PC-9 (cell line): ENCODE measurements at regions of chr2 and their contacts with region 1.

Region 1: DNA sequence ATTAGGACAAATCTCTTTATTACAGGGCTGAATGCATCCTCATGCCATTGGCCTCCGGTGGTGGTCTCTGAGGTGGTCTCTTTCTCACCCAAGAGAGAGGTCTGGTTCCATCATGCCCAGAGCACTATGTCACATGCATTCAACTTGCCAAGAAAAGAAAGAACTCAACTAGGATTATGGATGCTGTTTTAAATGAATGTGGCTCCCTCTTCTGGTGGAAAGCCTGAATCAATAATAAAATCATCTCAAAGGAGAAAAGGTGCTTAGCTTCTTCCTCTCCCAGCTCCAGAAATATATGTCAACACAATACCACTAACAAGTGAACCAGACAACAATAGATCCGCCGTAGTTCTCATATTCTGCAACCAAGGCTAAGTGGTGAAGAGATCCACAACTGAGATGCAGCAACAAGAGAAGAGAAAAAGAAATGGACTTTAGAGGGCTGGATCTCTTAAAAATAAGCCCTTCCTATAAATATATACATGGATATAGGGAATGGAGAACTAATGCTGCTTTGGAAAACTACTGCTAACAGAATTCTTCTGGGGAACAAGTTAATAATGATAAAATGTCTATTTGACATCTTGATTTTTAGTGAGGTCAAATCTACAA is 396.8 kb downstream of the NCKAP5 start:
- DNase-seq: peak in 1 of 2 experiments; percentile 1
- H3K4me3 ChIP-seq: no peak overlapping the region
- H3K27ac ChIP-seq: no peak overlapping the region
- H3K4me1 ChIP-seq: no peaks in the 10 kb centered on the region
- H3K27me3 ChIP-seq: no peaks in the 10 kb centered on the region
- CTCF ChIP-seq: peak; percentile 79

Region 2: GRCh38 chr2:132547074-132547687 is 624.3 kb before region 1 on chr2:
- CTCF ChIA-PET with region 1: no interaction called
- POLR2A ChIA-PET with region 1: no interaction called
- intact Hi-C with region 1: loop called (anchors 1 kb)
- DNase-seq: peak in 1 of 2 experiments; percentile 41
- H3K4me3 ChIP-seq: no peak overlapping the region
- H3K27ac ChIP-seq: no peak overlapping the region
- H3K4me1 ChIP-seq: peaks cover 21% of the 10 kb centered on the region
- H3K27me3 ChIP-seq: no peaks in the 10 kb centered on the region
- CTCF ChIP-seq: peak; percentile 74

Region 3: GRCh38 chr2:132863961-132864360 is 307.5 kb before region 1 on chr2:
- CTCF ChIA-PET with region 1: no interaction called
- POLR2A ChIA-PET with region 1: no interaction called
- intact Hi-C with region 1: no loop called
- DNase-seq: no peak
- H3K4me3 ChIP-seq: no peak overlapping the region
- H3K27ac ChIP-seq: no peak overlapping the region
- H3K4me1 ChIP-seq: no peaks in the 10 kb centered on the region; the same call in 1 of the 2 replicates
- H3K27me3 ChIP-seq: no peaks in the 10 kb centered on the region; the same call in 1 of the 2 replicates
- CTCF ChIP-seq: no peak

Region 4: DNA sequence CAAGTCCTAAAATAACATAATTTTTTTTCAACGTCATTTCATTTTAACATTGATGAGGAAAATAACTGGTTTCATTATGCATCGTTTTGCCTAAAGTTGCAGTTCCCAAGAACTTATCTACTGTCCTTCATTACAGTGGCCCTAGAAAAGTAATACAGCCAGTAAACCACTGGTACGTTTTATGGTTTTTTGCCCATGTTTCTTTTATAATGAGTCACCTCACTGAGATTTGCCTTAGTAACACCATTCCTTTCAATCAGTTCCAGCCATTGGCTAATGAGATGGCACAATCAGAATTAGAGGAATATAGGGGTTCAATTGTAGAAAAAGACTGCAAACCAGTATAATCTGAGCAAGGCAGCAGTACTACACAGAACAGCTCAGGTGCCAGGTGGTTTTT is 78.9 kb before region 1 on chr2:
- CTCF ChIA-PET with region 1: no interaction called
- POLR2A ChIA-PET with region 1: no interaction called
- intact Hi-C with region 1: no loop called
- DNase-seq: no peak
- H3K4me3 ChIP-seq: no peak overlapping the region
- H3K27ac ChIP-seq: no peak overlapping the region
- H3K4me1 ChIP-seq: no peaks in the 10 kb centered on the region
- H3K27me3 ChIP-seq: no peaks in the 10 kb centered on the region
- CTCF ChIP-seq: no peak

Region 5: DNA sequence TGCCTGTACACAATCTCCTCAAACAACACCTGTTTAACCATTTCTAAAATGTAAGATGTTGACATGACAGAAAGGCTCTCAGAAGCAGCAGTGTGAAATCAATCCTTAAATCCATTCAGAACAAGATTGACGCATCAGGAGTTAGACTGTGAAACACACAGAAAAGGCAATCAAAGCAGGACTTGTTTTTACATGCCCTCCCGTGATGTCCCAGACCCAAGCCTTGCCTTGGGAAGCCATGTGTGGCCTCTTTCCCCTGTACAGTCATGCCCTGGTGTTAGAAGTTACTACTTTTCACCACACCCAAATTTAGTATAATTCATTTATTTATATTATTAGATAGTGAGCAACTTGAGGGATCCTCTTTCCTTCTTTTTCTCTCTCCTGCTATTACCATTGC is 281.1 kb after region 1 on chr2:
- CTCF ChIA-PET with region 1: no interaction called
- POLR2A ChIA-PET with region 1: no interaction called
- intact Hi-C with region 1: no loop called
- DNase-seq: no peak
- H3K4me3 ChIP-seq: no peak overlapping the region
- H3K27ac ChIP-seq: no peak overlapping the region
- H3K4me1 ChIP-seq: no peaks in the 10 kb centered on the region
- H3K27me3 ChIP-seq: no peaks in the 10 kb centered on the region; the same call in 1 of the 2 replicates
- CTCF ChIP-seq: no peak